Mammary epithelial cell (primary cell): ENCODE measurements at regions of chr1 and their contacts with region 1.

Region 1: DNA sequence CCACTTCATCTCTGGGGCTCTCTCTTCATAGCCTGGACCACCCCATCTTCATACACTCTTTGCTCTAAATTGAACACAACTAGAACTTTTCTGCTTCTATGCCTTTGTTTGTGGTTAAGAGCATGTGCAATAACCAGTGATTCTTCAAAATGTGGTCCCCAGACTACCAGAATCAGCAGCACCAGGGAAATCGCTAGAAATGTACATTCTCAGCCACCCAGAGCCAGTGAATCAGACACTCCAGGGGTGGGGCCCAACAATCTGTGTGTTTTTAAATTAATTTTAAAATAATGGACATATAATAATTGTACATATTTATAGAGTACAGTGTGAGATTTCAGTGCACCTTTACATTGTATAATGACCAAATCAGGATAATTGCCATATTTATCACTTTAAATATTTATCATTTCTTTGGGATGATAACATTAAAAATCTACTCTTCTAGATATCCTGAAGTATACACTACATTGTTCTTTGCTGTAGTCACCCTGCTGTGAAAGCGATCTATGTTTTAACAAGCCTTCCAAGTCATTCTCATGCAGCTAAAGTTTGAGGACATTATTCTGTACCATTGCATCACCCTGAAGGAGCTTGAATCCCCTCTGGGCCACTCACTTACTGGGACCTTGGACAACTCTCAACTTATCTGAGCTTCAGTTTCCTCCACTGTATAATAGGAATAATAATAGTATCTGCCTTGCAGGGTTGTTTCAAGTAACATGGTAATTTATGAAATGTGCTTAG is 10.8 kb downstream of the GRHL3 start:
- DNase-seq: peak; percentile 60
- H3K4me3 ChIP-seq: no peak overlapping the region
- H3K27ac ChIP-seq: peak overlapping the region; percentile 27
- H3K4me1 ChIP-seq: peaks cover 23% of the 10 kb centered on the region
- H3K27me3 ChIP-seq: no peaks in the 10 kb centered on the region
- CTCF ChIP-seq: no peak

Region 2: GRCh38 chr1:23854568-23854967 is 475.4 kb before region 1 on chr1:
- CTCF ChIA-PET with region 1: no interaction called
- dilution Hi-C with region 1: no loop called
- in situ Hi-C with region 1: no loop called
- intact Hi-C with region 1: no loop called
- DNase-seq: no peak
- H3K4me3 ChIP-seq: no peak overlapping the region
- H3K27ac ChIP-seq: no peak overlapping the region
- H3K4me1 ChIP-seq: no peaks in the 10 kb centered on the region
- H3K27me3 ChIP-seq: no peaks in the 10 kb centered on the region
- CTCF ChIP-seq: peak in 1 of 2 donors; percentile 36

Region 3: GRCh38 chr1:24070821-24071393 is 259.1 kb before region 1 on chr1:
- CTCF ChIA-PET with region 1: no interaction called
- dilution Hi-C with region 1: no loop called
- in situ Hi-C with region 1: no loop called
- intact Hi-C with region 1: no loop called
- DNase-seq: peak; percentile 75
- H3K4me3 ChIP-seq: no peak overlapping the region
- H3K27ac ChIP-seq: no peak overlapping the region
- H3K4me1 ChIP-seq: no peaks in the 10 kb centered on the region
- H3K27me3 ChIP-seq: no peaks in the 10 kb centered on the region
- CTCF ChIP-seq: peak; percentile 70 to 97

Region 4: DNA sequence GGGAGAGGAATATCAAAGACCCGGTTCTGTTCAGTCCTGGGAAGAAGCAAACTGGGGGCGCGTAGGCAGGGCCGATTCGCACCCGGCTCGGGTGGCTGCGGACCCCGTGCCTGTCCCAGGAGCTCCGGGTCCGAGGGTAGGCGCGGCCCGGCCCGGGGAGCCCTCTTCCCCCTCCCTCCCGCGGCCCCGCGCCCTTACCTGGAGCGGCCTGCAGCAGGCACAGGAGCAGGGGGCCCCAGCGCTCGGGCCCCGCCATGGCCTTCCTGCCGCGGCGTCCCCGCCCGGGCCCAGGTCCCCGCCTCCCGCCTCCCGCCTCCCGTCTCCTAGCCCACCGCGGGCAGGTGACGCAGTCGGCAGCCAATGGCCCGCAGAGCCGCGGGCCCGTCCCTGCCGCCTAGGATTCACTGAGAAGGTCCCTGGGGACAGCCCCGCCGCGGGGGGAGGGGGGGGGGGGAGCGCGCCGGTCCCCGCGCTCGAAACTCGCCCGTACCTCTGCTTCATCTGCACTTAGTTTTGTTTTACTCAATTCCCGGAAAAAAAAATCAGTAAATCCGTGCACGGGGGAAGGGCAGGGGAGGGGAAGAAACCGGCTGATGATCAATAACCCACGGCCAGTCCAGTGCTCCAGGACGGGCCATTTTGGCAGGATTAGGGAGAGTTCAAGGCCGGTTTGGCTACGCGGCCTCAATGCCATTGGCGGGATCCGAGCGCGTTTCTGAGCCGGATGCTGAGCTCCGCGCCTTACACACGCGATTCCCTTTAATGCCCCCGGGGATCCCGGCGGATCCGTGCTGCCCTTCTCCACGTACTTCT is 142.8 kb before region 1 on chr1 and contains the start of gene IFNLR1:
- CTCF ChIA-PET with region 1: no interaction called
- dilution Hi-C with region 1: loop called (anchors 5 kb)
- in situ Hi-C with region 1: no loop called
- intact Hi-C with region 1: no loop called
- DNase-seq: peak; percentile 55
- H3K4me3 ChIP-seq: peak within 1 kb of the TSS; percentile 53 to 62 (median 58)
- H3K27ac ChIP-seq: peak within 1 kb of the TSS; percentile 49
- H3K4me1 ChIP-seq: peaks cover 40% of the 10 kb centered on the region
- H3K27me3 ChIP-seq: no peaks in the 10 kb centered on the region
- CTCF ChIP-seq: no peak
- total RNA-seq, gene IFNLR1: 7.8 to 12.5 TPM